ENCODE measurements at regions of chr2 and their contacts with region 1.

Region 1: DNA sequence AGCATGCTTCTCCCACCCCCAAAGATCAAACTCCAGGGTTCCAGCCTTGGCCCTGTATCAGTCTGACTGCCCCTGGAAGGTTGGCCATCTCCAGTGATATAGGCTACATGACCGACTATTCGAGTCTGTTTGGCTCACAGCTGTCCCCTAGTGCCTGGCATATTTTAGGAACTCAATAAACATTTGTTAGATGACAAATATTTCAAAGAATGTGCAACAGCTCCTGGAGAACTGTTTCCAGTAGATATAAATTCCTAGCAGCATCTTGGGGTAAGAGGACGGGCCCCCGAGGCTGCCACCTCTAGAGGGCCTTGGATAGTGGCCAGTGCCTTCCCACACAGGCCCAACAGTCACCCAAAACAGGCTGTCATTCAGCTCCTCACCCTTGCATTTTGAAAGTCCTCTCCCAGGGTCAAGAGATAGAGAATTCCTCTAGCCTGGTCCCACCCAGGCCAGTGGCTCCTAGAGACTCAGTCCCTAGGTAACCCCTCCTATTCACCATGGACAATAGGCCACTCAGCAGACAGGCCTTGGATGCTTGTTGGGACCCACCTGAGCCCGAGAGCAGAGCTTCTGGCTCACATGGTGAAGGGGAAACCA is 45.1 kb upstream of the ATP6V1B1 start:
- DNase-seq: no peak
- H3K4me3 ChIP-seq: no peak overlapping the region
- H3K27ac ChIP-seq: peak overlapping the region in 1 of 2 donors; percentile 25
- H3K4me1 ChIP-seq: peaks cover 0 to 9% of the 10 kb centered on the region in 2 donors
- H3K27me3 ChIP-seq: peaks cover 0 to 42% of the 10 kb centered on the region in 2 donors
- CTCF ChIP-seq: no peak
- POLR2A ChIP-seq: no peak

Region 2: DNA sequence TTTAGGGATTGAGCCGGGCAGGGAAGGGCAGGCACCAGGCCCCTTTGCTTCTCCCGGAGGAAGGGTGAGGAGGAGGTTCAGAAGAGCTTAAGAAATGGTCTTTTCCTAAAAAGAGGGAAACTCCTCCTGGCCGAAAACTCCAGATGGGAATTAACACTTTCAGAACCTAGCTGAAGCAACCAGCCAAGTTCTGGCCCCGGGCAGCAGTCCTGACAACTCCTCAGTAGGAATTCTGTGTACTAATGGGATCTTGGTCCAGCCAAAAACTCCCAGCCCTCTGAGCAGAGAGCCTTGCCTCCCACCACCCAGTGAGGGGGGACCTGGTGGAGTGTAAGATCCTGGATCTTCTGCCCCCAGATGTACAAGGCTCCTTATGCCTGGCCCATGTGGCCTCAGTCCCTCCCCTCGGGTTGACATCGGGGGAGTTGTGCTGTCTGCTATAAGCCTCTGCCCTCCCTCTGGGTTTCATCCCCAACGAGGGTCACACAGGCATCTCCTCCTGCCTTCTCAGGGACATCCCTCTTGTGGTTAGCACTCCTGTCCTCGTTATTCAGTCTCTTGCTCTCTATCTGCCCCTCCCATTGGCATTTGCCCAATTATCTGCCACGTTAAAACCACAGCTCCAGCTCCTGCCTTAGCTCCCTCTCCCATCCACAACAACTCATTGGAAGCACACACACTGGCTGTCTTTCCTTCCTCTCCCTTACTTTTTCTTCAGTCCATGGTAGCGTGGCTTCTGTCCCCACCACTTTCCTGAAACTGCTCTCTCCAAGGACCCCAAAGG is 1072.5 kb after region 1 on chr2:
- intact Hi-C with region 1: loop called (anchors 10 kb)
- DNase-seq: no peak
- H3K4me3 ChIP-seq: no peak overlapping the region
- H3K27ac ChIP-seq: no peak overlapping the region
- H3K4me1 ChIP-seq: no peaks in the 10 kb centered on the region
- H3K27me3 ChIP-seq: no peaks in the 10 kb centered on the region
- CTCF ChIP-seq: no peak
- POLR2A ChIP-seq: no peak